Activated CD4-positive, alpha-beta memory T cell treated with anti-CD3 and anti-CD28 coated beads for 36 hours (primary cell): ENCODE measurements at regions of chr13 and their contacts with region 1.

Region 1: DNA sequence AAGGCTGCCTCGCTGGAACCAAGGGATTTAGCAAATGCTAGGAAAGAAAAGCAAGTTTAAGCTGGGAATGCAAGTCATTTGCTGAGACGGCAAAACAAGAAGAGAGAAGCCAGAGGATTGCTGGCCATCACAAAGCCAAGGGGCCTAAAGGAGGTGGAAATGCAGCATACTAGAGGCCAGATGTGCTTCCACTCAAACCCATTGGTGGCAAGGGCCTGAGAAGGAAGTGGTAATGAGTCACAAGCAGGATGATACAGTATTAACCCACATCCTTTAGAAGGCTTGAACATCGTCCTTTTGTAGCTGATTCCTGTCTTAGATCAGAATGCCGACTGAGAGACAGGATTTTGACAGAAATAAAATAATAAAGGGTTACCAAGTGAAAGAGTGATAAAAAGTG is 68.2 kb downstream of the ITGBL1 start:
- DNase-seq: peak; percentile 34
- H3K4me3 Mint-ChIP-seq: no peak overlapping the region
- H3K27ac Mint-ChIP-seq: no peak overlapping the region
- H3K4me1 Mint-ChIP-seq: peaks cover 28% of the 10 kb centered on the region
- H3K27me3 Mint-ChIP-seq: no peaks in the 10 kb centered on the region

Region 2: GRCh38 chr13:101452519-101453485 is 67.9 kb before region 1 on chr13 and contains the start of gene ITGBL1:
- CTCF ChIA-PET with region 1: no interaction called
- POLR2A ChIA-PET with region 1: no interaction called
- intact Hi-C with region 1: loop called (anchors 2 kb)
- DNase-seq: no peak
- H3K4me3 Mint-ChIP-seq: no peak within 1 kb of the TSS
- H3K27ac Mint-ChIP-seq: no peak within 1 kb of the TSS
- H3K4me1 Mint-ChIP-seq: peaks cover 3% of the 10 kb centered on the region
- H3K27me3 Mint-ChIP-seq: peaks cover 21% of the 10 kb centered on the region
- total RNA-seq, gene ITGBL1: not detected